Naive thymus-derived CD4-positive, alpha-beta T cell (primary cell): ENCODE measurements at regions of chr21 and their contacts with region 1.

Region 1: DNA sequence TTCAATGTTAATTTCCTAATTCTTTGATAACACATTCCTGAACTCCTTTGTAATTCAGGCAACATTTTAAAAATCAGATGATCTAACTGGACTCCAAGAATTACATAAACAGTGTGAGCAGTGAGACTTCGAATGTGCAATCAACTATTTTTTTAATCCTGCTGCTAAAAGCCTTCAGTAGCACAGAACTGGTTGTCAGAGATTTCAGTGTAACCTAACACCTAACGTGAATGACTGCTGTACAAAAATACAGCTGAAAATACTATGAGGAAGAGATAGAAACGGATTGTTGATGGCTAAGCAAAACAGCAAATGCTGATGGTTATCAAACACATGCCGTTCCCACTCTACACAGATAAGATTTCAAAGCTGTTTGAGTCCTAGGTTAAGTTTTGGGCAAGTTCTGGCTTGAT is 46.1 kb downstream of the APP start:
- DNase-seq: no peak
- ATAC-seq: no peak
- H3K4me3 ChIP-seq: no peak overlapping the region
- H3K4me3 Mint-ChIP-seq: no peak overlapping the region
- H3K27ac ChIP-seq: no peak overlapping the region
- H3K27ac Mint-ChIP-seq: no peak overlapping the region
- H3K4me1 ChIP-seq: no peaks in the 10 kb centered on the region
- H3K4me1 Mint-ChIP-seq: peaks cover 4 to 25% (median 14%) of the 10 kb centered on the region in 7 donors
- H3K27me3 ChIP-seq: no peaks in the 10 kb centered on the region
- H3K27me3 Mint-ChIP-seq: no peaks in the 10 kb centered on the region

Region 2: GRCh38 chr21:26112127-26112742 is 12.2 kb before region 1 on chr21:
- CTCF ChIA-PET with region 1: no interaction called
- POLR2A ChIA-PET with region 1: no interaction called
- intact Hi-C with region 1: loop called in 1 of 2 experiments (anchors 1 kb)
- DNase-seq: no peak
- ATAC-seq: no peak
- H3K4me3 ChIP-seq: no peak overlapping the region
- H3K4me3 Mint-ChIP-seq: no peak overlapping the region
- H3K27ac ChIP-seq: no peak overlapping the region
- H3K27ac Mint-ChIP-seq: no peak overlapping the region
- H3K4me1 ChIP-seq: peaks cover 0 to 4% of the 10 kb centered on the region in 2 donors
- H3K4me1 Mint-ChIP-seq: peaks cover 5 to 33% (median 18%) of the 10 kb centered on the region in 7 donors
- H3K27me3 ChIP-seq: no peaks in the 10 kb centered on the region
- H3K27me3 Mint-ChIP-seq: no peaks in the 10 kb centered on the region